WTC11 (cell line): ENCODE measurements at regions of chr12 and their contacts with region 1.

Region 1: GRCh38 chr12:44942714-44943113 is 66.6 kb upstream of the NELL2 start:
- DNase-seq: no peak
- ATAC-seq: no peak
- H3K4me3 Mint-ChIP-seq: no peak overlapping the region
- H3K27ac Mint-ChIP-seq: no peak overlapping the region
- H3K4me1 Mint-ChIP-seq: peaks cover 15% of the 10 kb centered on the region
- H3K27me3 Mint-ChIP-seq: no peaks in the 10 kb centered on the region
- CTCF ChIP-seq: no peak

Region 2: DNA sequence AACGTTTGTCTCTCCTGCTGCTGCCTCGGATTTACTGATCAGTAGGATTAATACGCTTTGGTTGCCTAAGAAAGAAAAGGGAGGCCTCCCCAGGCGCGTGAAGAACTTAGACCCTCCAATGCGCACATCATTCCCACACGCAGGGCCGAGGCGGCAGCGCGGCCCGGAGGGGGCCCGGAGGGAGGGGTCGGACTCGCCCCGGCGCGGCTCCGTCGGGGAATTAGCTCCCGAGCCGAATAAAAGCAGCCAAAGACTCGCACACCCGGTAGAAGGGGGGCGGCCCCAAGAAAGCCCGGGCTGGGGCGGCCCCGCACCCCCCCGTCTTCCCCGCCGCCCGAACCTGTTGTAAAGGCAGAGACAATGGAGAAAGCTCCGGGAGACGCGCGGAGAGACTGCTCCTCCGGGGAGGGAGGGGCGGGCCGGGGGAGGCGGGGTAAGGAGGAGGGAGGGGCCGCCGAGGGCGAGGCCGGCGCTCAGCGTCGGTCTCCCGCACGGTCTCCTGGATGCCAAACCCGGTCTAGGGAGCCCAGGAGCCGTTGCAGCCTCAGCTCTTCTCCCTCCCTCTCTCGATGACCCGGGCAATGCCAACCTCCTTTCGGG is 66.7 kb before region 1 on chr12 and contains the start of gene NELL2:
- CTCF ChIA-PET with region 1: interaction called, 24 read pairs
- POLR2A ChIA-PET with region 1: no interaction called
- DNase-seq: peak; percentile 84
- ATAC-seq: peak; percentile 83
- H3K4me3 Mint-ChIP-seq: peak within 1 kb of the TSS; percentile 99
- H3K27ac Mint-ChIP-seq: peak within 1 kb of the TSS; percentile 87
- H3K4me1 Mint-ChIP-seq: peaks cover 20% of the 10 kb centered on the region
- H3K27me3 Mint-ChIP-seq: peaks cover 14% of the 10 kb centered on the region; the same call in 1 of the 2 replicates
- CTCF ChIP-seq: no peak
- total RNA-seq, gene NELL2: 37.4 to 49.9 TPM (median 45.8 TPM) in 3 replicates

Region 3: DNA sequence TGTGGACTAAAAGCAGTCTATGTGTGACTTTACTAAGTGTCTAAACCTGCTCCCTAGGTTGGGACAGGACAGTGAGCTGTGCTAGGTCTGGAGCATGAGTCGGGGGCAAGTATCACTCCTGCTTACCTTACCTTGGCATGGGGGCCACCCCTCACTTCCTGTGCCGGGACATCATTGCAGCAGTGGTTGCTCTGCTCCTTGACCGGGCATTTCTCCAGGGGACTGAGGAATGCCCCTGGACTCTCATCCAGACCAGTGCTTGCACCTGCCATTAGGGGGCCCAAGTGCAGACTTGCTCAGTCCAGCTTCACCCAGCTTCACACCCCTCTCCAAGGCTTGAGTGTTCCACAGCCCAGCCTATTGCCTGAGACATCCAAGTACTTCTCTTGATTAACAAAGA is 18.1 kb after region 1 on chr12:
- CTCF ChIA-PET with region 1: interaction called, 44 read pairs
- POLR2A ChIA-PET with region 1: no interaction called
- DNase-seq: peak; percentile 64
- ATAC-seq: peak; percentile 100
- H3K4me3 Mint-ChIP-seq: no peak overlapping the region
- H3K27ac Mint-ChIP-seq: no peak overlapping the region
- H3K4me1 Mint-ChIP-seq: peaks cover 19% of the 10 kb centered on the region
- H3K27me3 Mint-ChIP-seq: no peaks in the 10 kb centered on the region
- CTCF ChIP-seq: no peak